A673 (cell line): ENCODE measurements at regions of chr10 and their contacts with region 1.

Region 1: GRCh38 chr10:103598654-103599115 is 105.2 kb downstream of the NEURL1 start:
- DNase-seq: peak; percentile 78
- H3K4me3 ChIP-seq: no peak overlapping the region
- H3K27ac ChIP-seq: no peak overlapping the region
- H3K4me1 ChIP-seq: no peaks in the 10 kb centered on the region
- H3K27me3 ChIP-seq: no peaks in the 10 kb centered on the region
- CTCF ChIP-seq: peak; percentile 77

Region 2: DNA sequence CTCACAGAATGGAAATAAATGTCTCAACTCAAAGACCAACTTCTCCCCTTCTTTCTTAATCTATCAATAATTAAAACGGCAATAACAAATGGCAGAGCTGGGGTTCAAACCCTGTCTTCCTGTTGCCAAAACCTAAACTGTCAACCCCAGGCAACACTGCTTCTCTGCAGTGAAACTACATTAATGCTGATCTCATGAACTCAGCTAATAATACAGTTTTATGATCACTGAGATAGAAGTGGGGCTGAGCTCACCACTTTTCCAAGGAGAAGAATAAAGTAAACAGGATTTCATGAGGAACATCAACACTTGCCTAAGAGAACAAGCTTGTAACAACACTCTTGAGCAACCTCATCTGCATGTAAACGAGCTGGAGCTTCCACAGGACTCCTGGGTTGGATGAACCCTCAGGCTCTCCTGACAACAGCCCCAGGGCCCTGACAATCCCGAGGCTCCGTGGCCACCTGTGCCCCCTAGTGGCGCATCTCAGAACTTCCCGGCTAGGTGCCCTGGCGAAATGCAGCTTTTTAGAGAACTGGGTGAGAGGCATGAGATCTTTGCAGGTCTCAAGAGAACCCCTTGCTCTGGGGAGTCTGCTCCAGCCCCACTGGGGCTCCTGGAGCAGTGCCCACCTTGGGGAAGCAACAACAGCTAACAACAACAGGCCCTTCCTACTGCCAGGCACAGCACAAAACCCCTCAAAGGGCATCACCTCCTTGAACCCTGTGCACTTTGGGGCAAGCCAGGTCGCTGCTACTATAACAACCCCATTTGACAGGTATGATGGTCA is 87.4 kb after region 1 on chr10:
- CTCF ChIA-PET with region 1: interaction called, 7 read pairs
- POLR2A ChIA-PET with region 1: no interaction called
- intact Hi-C with region 1: loop called (anchors 2 kb)
- DNase-seq: peak; percentile 80
- H3K4me3 ChIP-seq: no peak overlapping the region
- H3K27ac ChIP-seq: no peak overlapping the region
- H3K4me1 ChIP-seq: no peaks in the 10 kb centered on the region
- H3K27me3 ChIP-seq: no peaks in the 10 kb centered on the region
- CTCF ChIP-seq: peak; percentile 94

Region 3: DNA sequence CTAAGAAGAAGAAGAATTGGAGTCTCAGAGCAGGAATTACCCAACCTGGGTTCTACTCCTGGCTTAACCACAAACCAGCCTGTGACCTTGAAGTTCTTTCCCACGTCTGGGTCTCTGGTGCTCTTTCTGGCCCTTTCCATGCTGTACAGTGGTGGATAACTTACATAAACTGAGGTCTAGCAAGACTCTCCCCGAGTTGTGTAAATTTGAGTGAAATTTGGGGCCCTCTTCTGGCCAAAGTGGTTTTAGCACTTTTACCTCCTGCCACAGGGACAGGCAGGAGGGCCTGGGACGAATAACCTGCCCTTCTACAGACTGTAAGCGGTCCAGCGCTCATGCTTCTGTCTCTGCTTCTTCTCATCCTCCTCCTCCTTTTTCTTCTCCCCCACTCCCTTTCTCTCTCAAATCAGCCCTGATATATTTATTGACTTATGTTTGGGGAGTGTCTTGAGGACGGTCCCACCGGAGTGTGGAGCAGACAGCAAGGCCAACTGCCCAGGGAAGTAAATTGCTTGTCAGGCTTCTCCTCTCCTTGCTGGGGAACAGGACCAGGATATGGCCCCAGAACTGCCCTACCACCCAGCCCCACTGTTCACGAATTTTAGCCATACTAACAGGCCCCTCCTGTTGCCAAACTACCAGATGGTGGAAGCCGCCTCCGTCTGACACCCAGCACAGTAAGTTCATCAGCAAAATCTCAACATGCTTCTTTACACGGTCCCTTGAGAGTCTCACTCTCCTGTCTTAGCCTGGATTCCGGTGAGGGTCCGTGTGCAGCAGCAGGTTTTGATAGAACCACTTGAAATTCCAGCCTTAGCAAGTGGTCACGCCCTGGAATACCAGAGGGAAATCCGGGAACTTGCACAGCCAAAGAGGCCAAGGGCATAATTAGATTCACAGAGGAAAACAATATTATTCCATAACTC is 260.7 kb after region 1 on chr10:
- CTCF ChIA-PET with region 1: no interaction called
- POLR2A ChIA-PET with region 1: no interaction called
- intact Hi-C with region 1: loop called (anchors 2 kb)
- DNase-seq: peak; percentile 86
- H3K4me3 ChIP-seq: no peak overlapping the region
- H3K27ac ChIP-seq: no peak overlapping the region
- H3K4me1 ChIP-seq: peaks cover 17% of the 10 kb centered on the region
- H3K27me3 ChIP-seq: no peaks in the 10 kb centered on the region
- CTCF ChIP-seq: peak; percentile 74